MCF 10A (cell line): ENCODE measurements at regions of chr9 and their contacts with region 1.

Region 1: DNA sequence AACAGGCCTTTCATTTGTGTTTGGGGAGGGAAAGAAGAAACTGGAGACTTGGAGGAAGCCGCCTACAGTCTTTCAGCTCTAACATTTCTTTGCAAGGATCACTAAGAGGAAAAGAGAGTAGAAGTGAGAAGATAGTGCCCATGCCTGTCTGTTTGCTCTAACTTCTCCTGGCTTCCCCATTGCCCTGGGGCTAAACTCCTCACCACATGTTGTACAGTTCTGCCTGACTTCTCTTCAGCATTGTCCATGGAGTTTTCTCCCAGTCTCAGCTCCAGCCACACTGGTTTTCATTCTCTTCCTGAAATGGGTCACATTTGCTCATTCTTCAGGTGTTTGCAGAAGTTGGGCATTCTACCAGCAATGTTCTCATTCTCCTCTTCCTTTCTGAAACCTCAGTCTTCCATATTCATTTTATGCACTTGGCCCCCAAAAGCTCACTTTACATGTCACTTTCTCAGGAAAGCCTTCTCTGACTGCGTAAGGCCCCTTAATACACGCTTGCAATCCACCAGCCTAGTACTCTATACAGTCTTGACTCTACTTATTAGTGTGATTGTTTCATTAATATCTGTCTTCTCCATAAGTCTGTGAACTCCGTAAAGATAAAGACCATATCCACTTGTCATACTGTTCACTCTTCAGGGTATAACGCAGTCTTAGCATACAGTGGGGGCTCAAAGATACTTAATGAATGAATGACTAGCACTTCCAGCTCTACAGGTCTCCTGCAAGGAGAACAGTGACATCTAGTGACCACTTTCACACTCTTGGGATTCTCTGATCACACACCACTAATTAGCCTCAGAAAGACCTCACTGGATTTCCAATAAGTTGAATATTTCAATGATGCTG is 40.2 kb upstream of the TRIM32 start:
- DNase-seq: peak; percentile 59
- H3K4me3 Mint-ChIP-seq: no peak overlapping the region
- H3K27ac Mint-ChIP-seq: no peak overlapping the region
- H3K4me1 Mint-ChIP-seq: peaks cover 6% of the 10 kb centered on the region
- H3K27me3 Mint-ChIP-seq: no peaks in the 10 kb centered on the region
- CTCF ChIP-seq: peak; percentile 80

Region 2: GRCh38 chr9:116589392-116590354 is 57.2 kb before region 1 on chr9:
- CTCF ChIA-PET with region 1: interaction called, 21 read pairs
- POLR2A ChIA-PET with region 1: no interaction called
- intact Hi-C with region 1: no loop called
- DNase-seq: peak; percentile 77
- H3K4me3 Mint-ChIP-seq: no peak overlapping the region
- H3K27ac Mint-ChIP-seq: no peak overlapping the region
- H3K4me1 Mint-ChIP-seq: peaks cover 5% of the 10 kb centered on the region
- H3K27me3 Mint-ChIP-seq: no peaks in the 10 kb centered on the region
- CTCF ChIP-seq: peak; percentile 36

Region 3: GRCh38 chr9:116693201-116693731 is 46.4 kb after region 1 on chr9:
- CTCF ChIA-PET with region 1: no interaction called
- POLR2A ChIA-PET with region 1: no interaction called
- intact Hi-C with region 1: no loop called
- DNase-seq: no peak
- H3K4me3 Mint-ChIP-seq: no peak overlapping the region
- H3K27ac Mint-ChIP-seq: no peak overlapping the region
- H3K4me1 Mint-ChIP-seq: peaks cover 47% of the 10 kb centered on the region
- H3K27me3 Mint-ChIP-seq: no peaks in the 10 kb centered on the region
- CTCF ChIP-seq: no peak